ENCODE measurements at regions of chr19 and their contacts with region 1.

Region 1: DNA sequence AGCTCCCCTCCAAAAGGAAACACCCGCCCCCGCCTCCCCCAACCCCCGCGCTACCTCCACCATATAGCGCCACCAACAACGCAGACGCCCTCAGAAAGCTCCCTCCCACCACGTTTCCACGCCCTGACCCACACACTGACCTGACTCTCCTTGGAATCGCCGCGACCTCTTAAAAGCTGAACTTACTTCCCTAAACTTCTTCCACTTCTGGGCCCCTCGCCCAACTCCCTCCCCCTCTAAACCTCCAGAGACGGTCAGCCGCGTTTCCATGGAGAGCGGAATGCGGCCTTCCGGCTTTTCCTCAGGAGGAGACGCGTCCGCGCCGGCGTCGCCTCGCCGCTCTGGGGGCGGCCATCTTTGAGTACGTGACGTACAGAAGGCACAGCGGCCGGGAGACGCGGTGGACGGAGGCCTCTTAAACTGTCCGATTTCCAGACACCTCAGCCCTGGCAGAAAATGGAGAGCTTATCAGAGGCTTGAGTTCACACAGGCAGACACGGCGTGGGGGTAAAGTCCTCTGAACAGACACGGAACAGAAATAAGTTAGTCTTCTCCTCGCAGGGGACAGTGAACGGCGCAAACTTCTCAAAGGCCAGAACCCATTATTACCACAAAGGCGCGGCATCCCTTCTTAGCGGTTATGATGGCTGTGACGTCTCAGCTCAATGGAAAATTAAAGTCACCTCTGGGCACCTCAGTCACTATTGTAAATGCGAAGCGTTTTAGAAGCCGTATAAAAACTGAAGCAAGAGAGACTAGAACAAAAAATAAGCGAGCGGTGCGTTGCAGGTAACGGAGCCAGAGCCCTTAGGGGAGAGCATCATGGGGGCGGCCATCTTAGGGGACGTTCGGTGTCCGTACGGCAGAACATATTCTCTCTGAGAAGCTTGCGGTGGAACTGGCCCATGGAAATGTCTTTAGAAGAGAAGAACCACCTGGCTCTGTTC is at the start of gene ZNF432:
- DNase-seq: peak; percentile 76
- H3K4me3 Mint-ChIP-seq: peak within 1 kb of the TSS; percentile 95
- H3K27ac Mint-ChIP-seq: peak within 1 kb of the TSS; percentile 99
- H3K4me1 Mint-ChIP-seq: peaks cover 20% of the 10 kb centered on the region
- H3K27me3 Mint-ChIP-seq: no peaks in the 10 kb centered on the region
- total RNA-seq, gene ZNF432: 12.5 and 15.0 TPM in 2 replicates

Region 2: DNA sequence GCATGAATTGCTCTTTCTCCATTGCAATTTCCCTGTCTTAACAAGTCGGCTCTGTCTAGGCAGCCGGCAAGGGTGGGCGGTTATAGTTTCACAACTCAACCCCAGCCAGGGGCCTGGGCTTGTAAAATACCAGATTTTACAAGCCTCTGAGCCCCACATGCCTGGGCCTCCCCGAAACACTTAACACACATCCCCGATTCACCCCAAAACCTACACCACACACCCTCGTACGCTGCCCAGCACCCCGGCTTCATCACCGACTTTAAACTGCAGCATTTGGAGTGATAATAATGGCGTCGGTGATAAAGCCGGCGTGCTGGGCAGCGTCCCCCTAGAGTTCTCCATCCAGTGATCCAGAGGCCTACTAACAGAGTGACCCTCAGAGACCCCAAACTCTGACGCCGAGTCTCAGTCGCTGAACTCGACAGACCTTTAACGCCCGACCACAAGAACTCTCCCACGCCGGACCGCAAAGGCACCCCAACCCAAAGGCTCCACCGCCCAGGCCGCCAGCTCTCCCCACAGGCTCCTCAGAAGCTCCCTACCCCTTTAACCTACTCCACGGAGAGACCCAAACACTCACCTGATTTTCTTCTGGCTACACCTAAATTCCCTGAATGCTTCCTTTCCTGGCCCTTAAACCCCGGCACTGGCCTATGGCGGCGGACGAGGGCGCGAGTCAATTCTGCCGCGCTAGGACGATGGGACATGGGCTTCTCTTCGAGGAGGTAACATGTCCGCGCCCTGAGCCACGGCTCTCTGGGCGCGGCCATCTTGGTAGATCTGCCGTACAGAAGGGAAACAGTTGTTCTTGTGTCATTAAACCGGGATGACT is 144.3 kb before region 1 on chr19 and contains the start of gene ZNF649:
- intact Hi-C with region 1: loop called (anchors 1 kb)
- DNase-seq: peak; percentile 70
- H3K4me3 Mint-ChIP-seq: peak within 1 kb of the TSS; percentile 98
- H3K27ac Mint-ChIP-seq: peak within 1 kb of the TSS; percentile 99
- H3K4me1 Mint-ChIP-seq: peaks cover 21% of the 10 kb centered on the region
- H3K27me3 Mint-ChIP-seq: peaks cover 3% of the 10 kb centered on the region
- total RNA-seq, gene ZNF649: 10.5 and 12.3 TPM in 2 replicates

Region 3: DNA sequence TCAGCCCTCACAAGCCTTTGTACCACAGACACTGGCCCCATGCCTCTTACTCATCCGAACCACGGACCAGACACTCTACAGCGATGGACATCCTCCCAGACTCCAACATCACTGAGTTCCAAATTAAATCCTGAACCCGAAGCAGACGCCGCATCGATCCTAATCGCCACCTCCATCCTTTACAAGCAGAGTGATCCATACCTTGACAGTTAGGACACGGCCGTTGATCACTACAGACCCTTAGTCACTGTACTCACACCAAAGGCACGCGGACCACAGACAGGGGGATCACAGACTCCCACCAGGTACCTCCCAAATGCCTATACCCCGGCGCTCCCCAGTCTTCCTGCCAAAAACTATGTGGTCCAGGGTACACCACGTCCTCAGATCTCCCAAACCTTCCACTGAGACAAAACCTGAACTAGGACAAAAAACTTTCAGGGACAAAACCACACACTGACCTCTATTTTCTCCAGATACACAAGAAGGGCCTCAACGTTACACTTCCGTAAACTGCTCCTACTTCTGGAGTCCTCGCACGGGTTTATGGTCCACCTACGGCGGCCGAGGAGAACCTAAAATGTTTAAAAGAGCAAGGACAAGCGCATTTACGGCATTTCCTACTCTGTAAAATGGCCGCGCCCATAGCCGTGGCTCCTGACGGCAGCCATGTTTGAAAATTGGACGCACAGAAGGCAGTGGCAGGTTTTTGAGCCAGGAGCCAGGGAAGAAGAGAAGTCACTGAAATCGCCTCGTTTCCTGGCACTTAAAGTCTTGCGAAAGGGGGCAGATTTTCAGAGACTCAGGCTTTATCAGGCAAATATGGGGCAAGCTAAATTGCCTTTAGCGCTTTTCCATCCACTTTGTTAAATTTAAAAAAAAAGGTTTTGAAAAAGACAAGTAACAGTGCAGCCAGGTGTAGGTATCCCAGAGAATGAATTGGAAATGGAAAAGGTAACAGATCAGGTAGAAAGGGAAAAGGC is 62.2 kb before region 1 on chr19 and contains the start of gene ZNF350:
- intact Hi-C with region 1: loop called (anchors 2 kb)
- DNase-seq: peak; percentile 83
- H3K4me3 Mint-ChIP-seq: peak within 1 kb of the TSS; percentile 94
- H3K27ac Mint-ChIP-seq: peak within 1 kb of the TSS; percentile 88
- H3K4me1 Mint-ChIP-seq: peaks cover 12% of the 10 kb centered on the region
- H3K27me3 Mint-ChIP-seq: no peaks in the 10 kb centered on the region
- total RNA-seq, gene ZNF350: 7.9 and 8.7 TPM in 2 replicates

Region 4: DNA sequence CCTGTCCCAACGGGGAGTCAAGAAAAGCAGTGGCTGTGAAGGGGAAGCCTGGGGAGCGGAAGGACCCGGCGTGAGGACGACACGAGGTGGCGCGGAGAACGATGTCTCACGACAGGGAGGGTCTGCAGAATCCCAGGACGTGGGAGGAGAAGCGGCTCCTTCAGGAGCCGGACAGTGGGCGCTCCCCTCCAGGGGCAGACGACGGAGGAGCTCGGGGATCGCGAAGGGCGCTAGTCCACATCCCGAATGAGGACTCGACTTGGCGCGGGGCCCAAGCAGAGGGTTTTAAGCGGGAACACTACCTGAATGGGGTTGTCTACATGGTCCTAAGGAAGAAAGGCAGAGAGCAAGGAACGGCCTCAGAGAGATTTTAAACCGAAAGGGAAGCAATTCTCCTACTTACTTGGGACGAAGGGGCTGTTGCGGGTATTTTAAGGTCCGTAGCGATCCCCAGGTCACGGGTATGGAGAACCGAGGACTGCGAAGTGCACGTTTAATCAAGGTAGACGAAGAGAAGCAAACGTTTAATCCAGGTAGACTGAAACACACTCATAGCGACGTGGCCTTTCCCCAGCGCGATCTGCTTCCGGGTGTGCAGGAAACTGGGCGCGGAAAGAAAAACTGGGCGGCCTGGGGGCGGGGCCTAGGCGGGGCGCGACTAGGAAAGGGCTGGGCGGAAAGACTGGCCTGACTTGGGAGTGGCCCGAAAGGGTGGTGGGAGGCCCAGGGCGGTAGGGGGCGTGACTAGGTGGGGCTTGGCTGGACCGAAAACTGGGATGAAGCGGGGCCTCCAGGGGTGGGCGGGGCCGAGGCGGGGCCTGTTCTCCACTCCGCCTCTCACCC is 46.6 kb after region 1 on chr19 and contains the start of gene ZNF841:
- intact Hi-C with region 1: loop called (anchors 2 kb)
- DNase-seq: peak; percentile 81
- H3K4me3 Mint-ChIP-seq: peak within 1 kb of the TSS; percentile 92
- H3K27ac Mint-ChIP-seq: peak within 1 kb of the TSS; percentile 90
- H3K4me1 Mint-ChIP-seq: peaks cover 22% of the 10 kb centered on the region
- H3K27me3 Mint-ChIP-seq: no peaks in the 10 kb centered on the region
- total RNA-seq, gene ZNF841: 13.7 and 16.1 TPM in 2 replicates

Region 5: DNA sequence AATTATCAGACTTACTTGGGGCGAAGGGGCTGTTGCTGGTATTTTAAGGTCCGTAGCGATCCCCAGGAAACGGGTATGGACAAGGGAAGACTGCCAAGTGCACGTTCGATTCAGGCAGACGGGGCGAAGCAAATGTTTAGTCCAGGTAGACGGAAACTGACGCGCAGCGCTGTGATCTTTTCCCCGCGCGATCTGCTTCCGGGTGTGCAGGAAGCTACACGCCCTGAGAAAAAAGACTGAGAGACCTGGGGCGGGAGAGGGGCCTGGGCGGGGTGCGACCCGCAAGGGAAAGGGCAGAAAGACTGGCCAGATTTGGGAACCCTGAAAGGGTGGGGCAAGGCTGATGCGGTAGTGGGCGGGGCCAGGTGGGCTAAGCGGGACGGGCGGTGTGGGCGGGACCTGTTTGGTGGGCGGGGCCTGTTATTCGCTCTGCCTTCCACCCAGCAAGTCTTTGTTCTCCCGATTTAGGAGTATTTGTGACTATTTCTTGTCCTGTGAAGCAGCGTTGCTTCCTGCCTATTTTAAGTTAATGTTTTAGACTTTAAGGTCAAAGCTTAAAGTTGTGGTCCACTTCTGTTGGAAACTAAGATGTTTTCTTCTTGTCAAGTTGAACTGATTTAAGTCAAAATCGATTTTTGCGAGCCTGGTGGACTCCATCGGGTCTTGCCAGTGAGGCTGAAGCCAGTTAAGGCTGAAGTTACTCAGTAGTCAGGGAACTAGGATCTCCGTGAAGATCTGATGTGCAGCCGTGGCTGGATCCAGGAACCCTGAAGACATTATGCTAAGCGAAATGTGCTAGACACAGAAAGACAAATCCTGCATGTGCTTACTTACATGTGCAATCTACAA is 122.7 kb after region 1 on chr19 and contains the start of gene ZNF836:
- intact Hi-C with region 1: loop called (anchors 1 kb)
- DNase-seq: peak; percentile 83
- H3K4me3 Mint-ChIP-seq: peak within 1 kb of the TSS; percentile 97
- H3K27ac Mint-ChIP-seq: peak within 1 kb of the TSS; percentile 90
- H3K4me1 Mint-ChIP-seq: peaks cover 11% of the 10 kb centered on the region
- H3K27me3 Mint-ChIP-seq: no peaks in the 10 kb centered on the region
- total RNA-seq, gene ZNF836: 7.8 and 10.8 TPM in 2 replicates